Activated naive CD8-positive, alpha-beta T cell treated with anti-CD3 and anti-CD28 coated beads, Interleukin-2, amount 10 ng/mL, durations not matched to agents 7 days and 5 days (primary cell): ENCODE measurements at regions of chr1 and their contacts with region 1.

Region 1: GRCh38 chr1:212608209-212608955 is at the start of gene ATF3:
- DNase-seq: peak; percentile 91
- ATAC-seq: peak; percentile 78
- H3K4me3 Mint-ChIP-seq: peak within 1 kb of the TSS; percentile 87
- H3K27ac Mint-ChIP-seq: peak within 1 kb of the TSS; percentile 98
- H3K4me1 Mint-ChIP-seq: peaks cover 37% of the 10 kb centered on the region
- H3K27me3 Mint-ChIP-seq: peaks cover 41% of the 10 kb centered on the region
- total RNA-seq, gene ATF3: 13.1 to 13.8 TPM

Region 2: GRCh38 chr1:212477014-212477679 is 131.2 kb before region 1 on chr1:
- POLR2A ChIA-PET with region 1: interaction called, 10 read pairs
- DNase-seq: peak; percentile 66
- ATAC-seq: peak; percentile 88
- H3K4me3 Mint-ChIP-seq: peak overlapping the region; percentile 41
- H3K27ac Mint-ChIP-seq: no peak overlapping the region
- H3K4me1 Mint-ChIP-seq: peaks cover 25% of the 10 kb centered on the region
- H3K27me3 Mint-ChIP-seq: peaks cover 25% of the 10 kb centered on the region

Region 3: DNA sequence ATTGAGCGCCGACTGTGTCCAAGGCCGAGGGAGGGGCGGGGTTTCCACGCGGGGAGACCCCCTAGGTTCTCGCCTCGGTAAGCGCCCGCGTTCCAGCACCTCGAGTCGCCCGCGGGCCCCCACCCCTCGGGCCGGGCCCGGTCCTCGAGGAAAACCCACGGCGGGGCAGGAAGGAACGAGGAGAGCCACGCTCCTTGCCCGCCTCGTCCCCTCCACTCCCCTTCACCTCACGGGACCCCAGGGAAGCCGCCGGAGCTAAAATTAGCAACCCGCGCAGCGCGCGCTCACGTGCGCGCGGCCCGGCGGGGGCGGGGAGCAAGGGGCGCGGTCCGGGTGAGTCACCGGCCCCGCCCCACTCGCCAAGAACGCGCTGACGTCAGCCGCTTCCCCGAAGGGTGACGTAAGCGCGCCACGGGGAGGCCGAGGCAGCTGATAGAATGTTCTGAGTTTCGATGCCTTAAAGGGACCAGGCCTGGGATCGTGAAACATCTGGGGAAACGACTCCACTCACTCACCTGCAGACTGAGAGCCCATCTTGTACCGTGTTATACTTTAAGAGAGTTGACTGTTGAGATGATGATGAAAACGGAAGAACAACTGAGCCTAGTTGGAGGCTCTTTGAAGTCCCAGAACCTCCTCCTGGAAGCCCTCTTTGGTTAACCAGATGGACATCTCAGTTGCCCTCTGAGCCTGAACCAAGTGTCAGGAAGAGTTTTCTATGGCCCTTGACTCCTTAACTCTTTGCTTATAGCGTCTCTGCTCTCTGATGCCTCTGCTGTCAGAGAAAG is 49.5 kb before region 1 on chr1:
- POLR2A ChIA-PET with region 1: interaction called, 30 read pairs
- DNase-seq: peak; percentile 94
- ATAC-seq: peak; percentile 95
- H3K4me3 Mint-ChIP-seq: peak overlapping the region; percentile 85
- H3K27ac Mint-ChIP-seq: peak overlapping the region; percentile 95
- H3K4me1 Mint-ChIP-seq: peaks cover 8% of the 10 kb centered on the region
- H3K27me3 Mint-ChIP-seq: peaks cover 31% of the 10 kb centered on the region

Region 4: GRCh38 chr1:212566522-212567479 is 41.6 kb before region 1 on chr1:
- POLR2A ChIA-PET with region 1: interaction called, 27 read pairs
- DNase-seq: no peak
- ATAC-seq: peak; percentile 97
- H3K4me3 Mint-ChIP-seq: peak overlapping the region; percentile 89
- H3K27ac Mint-ChIP-seq: peak overlapping the region; percentile 89
- H3K4me1 Mint-ChIP-seq: peaks cover 10% of the 10 kb centered on the region
- H3K27me3 Mint-ChIP-seq: peaks cover 11% of the 10 kb centered on the region

Region 5: GRCh38 chr1:212595787-212596714 is 12.3 kb before region 1 on chr1:
- POLR2A ChIA-PET with region 1: interaction called, 67 read pairs
- DNase-seq: no peak
- ATAC-seq: peak; percentile 97
- H3K4me3 Mint-ChIP-seq: peak overlapping the region; percentile 82
- H3K27ac Mint-ChIP-seq: peak overlapping the region; percentile 94
- H3K4me1 Mint-ChIP-seq: peaks cover 18% of the 10 kb centered on the region
- H3K27me3 Mint-ChIP-seq: peaks cover 20% of the 10 kb centered on the region

Region 6: GRCh38 chr1:212618501-212619405 is 10.4 kb after region 1 on chr1:
- POLR2A ChIA-PET with region 1: interaction called, 11 read pairs
- DNase-seq: no peak
- ATAC-seq: no peak
- H3K4me3 Mint-ChIP-seq: no peak overlapping the region
- H3K27ac Mint-ChIP-seq: no peak overlapping the region
- H3K4me1 Mint-ChIP-seq: peaks cover 23% of the 10 kb centered on the region
- H3K27me3 Mint-ChIP-seq: no peaks in the 10 kb centered on the region

Region 7: DNA sequence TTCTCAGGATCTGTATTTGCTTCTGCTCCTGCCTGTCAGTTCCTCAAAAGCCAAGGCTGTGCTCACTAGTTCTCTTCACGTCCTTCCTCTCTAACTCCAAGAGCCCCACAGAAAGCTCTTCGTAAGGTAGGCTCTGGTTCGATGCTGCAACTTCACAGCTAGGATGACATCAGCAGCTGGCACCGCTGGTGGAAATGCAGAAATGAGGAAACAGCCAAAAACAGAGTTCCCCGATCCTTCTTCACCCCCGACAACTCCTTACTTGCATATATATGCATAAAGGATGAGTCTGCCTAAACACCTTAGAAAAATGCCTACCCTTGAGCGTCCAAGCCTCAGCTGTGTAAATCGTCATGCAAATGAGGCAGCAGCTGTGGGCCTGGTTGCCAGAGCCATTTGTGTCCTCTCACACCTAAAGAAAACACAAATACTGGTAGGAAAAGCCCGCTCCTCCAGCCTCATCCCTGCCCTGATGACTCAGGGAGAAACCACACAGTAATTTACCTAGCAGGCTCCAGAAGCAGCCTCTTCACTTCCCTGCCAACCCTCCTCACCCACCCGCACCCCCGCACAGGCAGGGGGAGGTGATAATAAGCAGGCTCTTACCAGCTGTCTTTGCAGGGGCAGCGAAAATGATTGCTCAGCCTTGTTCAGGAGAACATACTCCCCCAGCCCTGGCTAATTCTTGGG is 63.1 kb after region 1 on chr1:
- POLR2A ChIA-PET with region 1: no interaction called
- DNase-seq: no peak
- ATAC-seq: no peak
- H3K4me3 Mint-ChIP-seq: no peak overlapping the region
- H3K27ac Mint-ChIP-seq: no peak overlapping the region
- H3K4me1 Mint-ChIP-seq: peaks cover 20% of the 10 kb centered on the region
- H3K27me3 Mint-ChIP-seq: peaks cover 4% of the 10 kb centered on the region

Region 8: DNA sequence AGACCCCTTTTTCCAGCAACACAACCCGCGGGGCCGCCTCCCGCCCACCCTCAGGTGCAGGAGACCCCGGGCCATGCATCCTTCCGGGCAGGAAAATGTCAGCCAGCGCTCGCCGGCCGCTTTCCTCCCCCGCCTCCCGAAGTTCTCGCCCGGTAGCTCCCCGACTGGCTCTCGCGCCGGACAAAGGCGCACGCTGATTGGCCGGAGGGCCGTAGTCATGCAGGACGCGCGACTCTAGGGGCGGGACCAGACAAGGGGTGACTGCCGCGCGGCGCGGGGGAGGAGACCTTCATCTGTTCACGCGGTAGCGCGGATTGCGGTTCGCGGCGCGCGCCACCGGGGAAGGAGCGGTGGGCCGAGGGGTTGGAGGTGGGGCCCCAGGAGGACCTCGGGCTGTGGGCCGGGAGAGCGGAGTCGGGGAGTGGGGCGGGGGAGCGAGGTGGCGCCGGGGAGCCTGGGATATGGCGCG is 249.6 kb after region 1 on chr1 and contains the start of gene FLVCR1:
- POLR2A ChIA-PET with region 1: interaction called, 11 read pairs
- DNase-seq: peak; percentile 95
- ATAC-seq: peak; percentile 99
- H3K4me3 Mint-ChIP-seq: peak within 1 kb of the TSS; percentile 94
- H3K27ac Mint-ChIP-seq: peak within 1 kb of the TSS; percentile 97
- H3K4me1 Mint-ChIP-seq: peaks cover 15% of the 10 kb centered on the region
- H3K27me3 Mint-ChIP-seq: no peaks in the 10 kb centered on the region
- total RNA-seq, gene FLVCR1: 10.6 to 12.9 TPM